ENCODE measurements at regions of chr3 and their contacts with region 1.

Region 1: GRCh38 chr3:44439499-44440295 is 37.8 kb downstream of the ZNF445 start:
- DNase-seq: peak; percentile 86
- ATAC-seq: peak; percentile 88
- H3K4me3 Mint-ChIP-seq: peak overlapping the region; percentile 58
- H3K27ac Mint-ChIP-seq: peak overlapping the region; percentile 97
- H3K4me1 Mint-ChIP-seq: peaks cover 43% of the 10 kb centered on the region
- H3K27me3 Mint-ChIP-seq: no peaks in the 10 kb centered on the region

Region 2: DNA sequence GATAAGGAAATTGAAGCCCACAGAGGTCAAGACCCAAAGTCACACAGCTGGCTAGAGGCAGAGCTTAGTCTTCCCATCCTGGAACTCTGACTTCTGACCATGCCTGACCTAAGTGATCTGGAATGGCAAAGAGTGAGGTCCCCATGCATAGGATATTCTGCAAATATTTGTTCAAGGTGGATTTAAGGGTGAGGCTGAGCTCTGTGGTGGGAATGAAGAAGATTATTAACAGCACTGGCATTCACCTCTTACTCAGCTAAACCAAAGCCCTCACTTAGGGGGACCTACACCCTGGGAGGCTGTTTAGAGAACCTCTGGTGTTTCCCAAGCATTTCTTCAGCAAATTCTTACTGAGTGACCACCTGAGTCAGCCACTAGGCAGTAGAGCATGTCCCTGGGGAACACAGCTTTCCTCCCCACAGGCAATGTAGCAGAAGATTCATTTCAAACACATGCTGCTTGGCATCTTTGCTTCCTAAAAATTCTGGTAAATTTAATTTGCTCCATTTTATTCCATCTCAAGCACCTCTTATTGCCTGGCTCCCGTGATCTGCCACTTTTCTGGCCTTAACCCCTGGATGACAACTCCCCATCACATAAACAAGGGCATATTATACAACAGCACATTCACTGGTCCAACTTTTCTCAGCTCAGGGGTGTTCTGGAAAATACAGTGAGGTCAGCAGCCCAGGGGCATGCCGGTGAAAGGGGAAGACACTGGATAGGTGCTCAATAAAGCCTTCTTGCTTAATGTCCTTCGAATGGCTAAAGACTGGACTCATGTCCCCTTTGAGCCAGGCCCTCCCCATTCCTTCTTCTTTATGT is 573.0 kb before region 1 on chr3:
- CTCF ChIA-PET with region 1: no interaction called
- POLR2A ChIA-PET with region 1: no interaction called
- intact Hi-C with region 1: no loop called
- DNase-seq: no peak
- ATAC-seq: no peak
- H3K4me3 Mint-ChIP-seq: no peak overlapping the region
- H3K27ac Mint-ChIP-seq: no peak overlapping the region
- H3K4me1 Mint-ChIP-seq: no peaks in the 10 kb centered on the region
- H3K27me3 Mint-ChIP-seq: peaks cover 10% of the 10 kb centered on the region

Region 3: DNA sequence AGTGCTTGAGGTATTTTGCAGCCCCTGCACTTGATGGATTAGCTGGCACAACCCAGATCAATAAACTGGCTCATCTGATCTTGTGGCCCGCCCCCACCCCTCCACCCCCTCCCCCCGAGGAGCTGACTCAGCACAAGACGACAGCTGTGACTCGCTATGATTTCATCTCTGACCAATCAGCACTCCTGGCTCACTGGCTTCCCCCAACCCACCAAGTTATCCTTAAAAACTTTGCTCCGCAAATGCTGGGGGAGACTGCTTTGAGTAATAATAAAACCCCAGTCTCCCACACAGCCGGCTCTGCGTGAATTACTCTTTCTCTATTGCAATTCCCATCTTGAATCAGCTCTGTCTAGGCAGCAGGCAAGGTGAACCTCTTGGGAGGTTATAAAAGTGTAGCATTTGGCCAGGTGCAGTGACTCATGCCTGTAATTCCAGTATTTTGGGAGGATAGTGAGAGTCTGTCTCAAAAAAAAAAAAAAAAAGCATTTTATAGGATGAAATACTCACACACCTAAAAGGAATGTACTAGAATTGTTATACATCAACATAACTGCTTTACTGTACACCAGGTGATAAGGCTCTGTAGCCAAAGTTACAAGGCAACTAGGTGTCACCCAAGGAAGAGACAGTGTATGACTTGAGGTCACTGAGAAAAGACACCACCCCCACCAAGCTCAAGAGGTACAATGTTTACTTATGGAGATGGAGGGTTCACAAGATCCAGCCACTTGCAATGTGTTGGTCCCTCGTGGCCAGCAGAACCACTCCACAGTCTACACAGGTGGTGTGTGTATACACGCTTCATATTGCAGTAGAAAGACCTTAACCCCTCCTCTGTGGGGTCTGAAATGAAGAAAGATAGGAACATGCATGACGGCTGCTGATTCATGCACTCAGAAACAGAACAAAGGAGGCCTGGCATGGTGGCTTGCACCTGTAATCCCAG is 29.1 kb after region 1 on chr3:
- CTCF ChIA-PET with region 1: interaction called, 3 read pairs
- POLR2A ChIA-PET with region 1: no interaction called
- intact Hi-C with region 1: loop called in 1 of 2 experiments (anchors 1 kb)
- DNase-seq: peak; percentile 72
- ATAC-seq: peak; percentile 85
- H3K4me3 Mint-ChIP-seq: no peak overlapping the region
- H3K27ac Mint-ChIP-seq: peak overlapping the region; percentile 52
- H3K4me1 Mint-ChIP-seq: peaks cover 42% of the 10 kb centered on the region
- H3K27me3 Mint-ChIP-seq: no peaks in the 10 kb centered on the region

Region 4: DNA sequence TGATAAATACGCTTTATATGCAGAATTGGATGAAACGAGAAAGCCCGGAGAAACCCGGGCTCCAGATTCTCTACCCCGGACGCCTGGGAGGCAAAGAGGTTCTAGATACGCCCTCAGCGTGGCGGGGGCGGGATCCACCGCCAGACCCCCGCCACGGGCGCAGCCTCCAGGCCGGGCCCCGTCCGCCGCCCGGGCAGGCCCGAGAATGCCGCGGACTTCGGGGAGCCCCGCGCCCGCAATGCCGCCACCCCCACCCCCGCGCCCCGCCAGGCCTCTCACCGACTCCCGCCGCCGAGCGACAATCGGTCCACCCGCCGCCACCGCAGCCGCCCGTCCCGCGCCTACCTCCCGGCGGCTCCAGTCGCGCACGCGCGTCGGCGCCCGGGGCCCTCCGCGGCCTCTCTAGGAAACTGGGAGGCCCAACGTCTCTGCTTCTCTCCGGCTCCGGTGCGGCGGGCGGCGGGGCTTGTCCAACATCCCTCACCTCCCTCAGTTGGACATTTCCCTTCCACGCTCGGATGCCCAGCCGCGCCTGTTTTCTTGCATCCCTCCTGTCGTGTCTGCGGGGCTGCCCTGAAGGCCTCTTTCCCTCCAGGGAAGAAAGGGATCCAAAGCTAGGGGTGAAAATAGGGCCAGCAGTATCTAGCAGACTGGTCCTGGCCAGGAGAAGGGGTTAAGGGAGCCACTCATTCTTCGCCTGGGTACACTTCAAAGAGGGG is 37.8 kb after region 1 on chr3 and contains the start of gene ZNF445:
- CTCF ChIA-PET with region 1: interaction called, 3 read pairs
- POLR2A ChIA-PET with region 1: no interaction called
- intact Hi-C with region 1: loop called (anchors 1 to 2 kb)
- DNase-seq: peak; percentile 87
- ATAC-seq: peak; percentile 89
- H3K4me3 Mint-ChIP-seq: peak within 1 kb of the TSS; percentile 75
- H3K27ac Mint-ChIP-seq: peak within 1 kb of the TSS; percentile 88
- H3K4me1 Mint-ChIP-seq: peaks cover 33% of the 10 kb centered on the region
- H3K27me3 Mint-ChIP-seq: no peaks in the 10 kb centered on the region
- total RNA-seq, gene ZNF445: 13.2 to 16.3 TPM